GM12878 (cell line): ENCODE measurements at regions of chr3 and their contacts with region 1.

Region 1: DNA sequence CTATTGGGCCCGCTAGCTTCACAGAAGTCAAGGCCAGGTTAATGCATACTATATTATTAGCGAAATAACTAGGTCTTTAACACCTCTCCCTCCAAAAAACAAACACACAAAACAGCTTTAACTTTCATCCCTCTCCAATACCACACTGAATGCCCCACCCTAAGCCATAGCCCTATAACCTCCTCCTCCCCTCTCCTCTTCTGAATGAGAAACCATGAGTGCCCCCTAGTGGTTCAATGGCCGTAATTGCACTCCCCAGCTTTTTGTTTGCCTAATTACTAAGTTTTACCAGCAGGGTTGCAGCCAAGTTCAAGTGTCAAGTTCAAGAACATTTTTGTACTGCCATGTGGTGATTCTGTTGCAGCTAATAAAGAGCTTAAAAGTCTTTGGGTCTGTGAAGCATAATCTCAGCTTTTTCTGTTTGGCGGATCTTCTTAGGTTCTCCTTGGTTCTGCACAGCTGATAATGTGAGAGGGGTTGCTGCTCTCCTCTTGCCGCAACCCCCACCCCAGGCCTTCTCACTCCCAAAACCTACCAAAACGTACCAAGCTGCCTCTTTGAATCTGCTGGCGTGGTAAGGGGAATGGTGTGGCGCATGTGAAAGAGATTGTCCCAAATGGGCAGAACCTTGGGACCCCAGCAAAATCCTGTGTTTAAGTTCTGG is 57.9 kb downstream of the RPL22L1 start:
- DNase-seq: peak; percentile 30
- ATAC-seq: peak; percentile 91
- H3K4me3 ChIP-seq: no peak overlapping the region
- H3K27ac ChIP-seq: no peak overlapping the region
- H3K4me1 ChIP-seq: no peaks in the 10 kb centered on the region
- H3K27me3 ChIP-seq: no peaks in the 10 kb centered on the region; a peak in 2 of 4 replicates
- CTCF ChIP-seq: peak; percentile 85 to 95 (median 88)
- EP300 ChIP-seq: no peak
- POLR2A ChIP-seq: no peak
- RAD21 ChIP-seq: peak; percentile 93

Region 2: GRCh38 chr3:170553788-170554757 is 258.0 kb before region 1 on chr3:
- CTCF ChIA-PET with region 1: interaction called, 11 read pairs
- POLR2A ChIA-PET with region 1: no interaction called
- RAD21 ChIA-PET with region 1: interaction called, 3 read pairs
- SMC1A ChIA-PET with region 1: interaction called, 3 read pairs
- in situ Hi-C with region 1: no loop called
- intact Hi-C with region 1: no loop called
- DNase-seq: no peak
- ATAC-seq: no peak
- H3K4me3 ChIP-seq: no peak overlapping the region
- H3K27ac ChIP-seq: no peak overlapping the region
- H3K4me1 ChIP-seq: no peaks in the 10 kb centered on the region
- H3K27me3 ChIP-seq: peaks cover 3 to 10% of the 10 kb centered on the region in 2 experiments; a peak in 2 of 4 replicates
- CTCF ChIP-seq: no peak
- EP300 ChIP-seq: no peak
- POLR2A ChIP-seq: no peak
- RAD21 ChIP-seq: peak; percentile 12; the same call in 1 of the 2 replicates

Region 3: DNA sequence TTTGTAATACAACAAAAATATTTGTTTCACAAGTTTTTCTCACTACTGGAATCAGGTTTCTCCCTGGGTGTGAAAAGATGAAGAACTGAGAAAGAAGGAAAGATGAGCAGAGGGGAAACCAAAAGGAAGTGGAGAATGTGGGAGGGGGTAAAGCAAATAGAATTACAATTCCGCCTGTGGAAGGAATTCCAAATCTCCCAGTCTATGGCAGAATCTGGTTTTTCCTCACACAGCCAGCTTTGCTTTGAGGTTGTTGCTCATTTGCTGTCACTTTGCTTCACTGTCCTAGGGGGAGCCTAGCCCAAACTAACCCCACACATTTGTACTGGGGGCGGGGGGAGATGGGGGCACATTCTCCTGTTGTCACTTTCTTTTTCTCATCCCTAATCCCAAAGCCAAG is 14.0 kb after region 1 on chr3:
- CTCF ChIA-PET with region 1: interaction called, 12 read pairs
- POLR2A ChIA-PET with region 1: no interaction called
- RAD21 ChIA-PET with region 1: no interaction called
- SMC1A ChIA-PET with region 1: interaction called, 5 read pairs
- in situ Hi-C with region 1: no loop called
- intact Hi-C with region 1: no loop called
- DNase-seq: no peak
- ATAC-seq: no peak
- H3K4me3 ChIP-seq: no peak overlapping the region
- H3K27ac ChIP-seq: no peak overlapping the region
- H3K4me1 ChIP-seq: no peaks in the 10 kb centered on the region
- H3K27me3 ChIP-seq: peaks cover 0 to 6% of the 10 kb centered on the region in 2 experiments
- CTCF ChIP-seq: no peak
- EP300 ChIP-seq: no peak
- POLR2A ChIP-seq: no peak
- RAD21 ChIP-seq: no peak

Region 4: GRCh38 chr3:170848292-170848917 is 36.3 kb after region 1 on chr3:
- CTCF ChIA-PET with region 1: interaction called, 25 read pairs
- POLR2A ChIA-PET with region 1: no interaction called
- RAD21 ChIA-PET with region 1: interaction called, 3 read pairs
- SMC1A ChIA-PET with region 1: interaction called, 4 read pairs
- in situ Hi-C with region 1: no loop called
- intact Hi-C with region 1: no loop called
- DNase-seq: no peak
- ATAC-seq: no peak
- H3K4me3 ChIP-seq: no peak overlapping the region
- H3K27ac ChIP-seq: no peak overlapping the region
- H3K4me1 ChIP-seq: no peaks in the 10 kb centered on the region
- H3K27me3 ChIP-seq: peaks cover under 1 to 6% of the 10 kb centered on the region in 2 experiments; a peak in 3 of 4 replicates
- CTCF ChIP-seq: peak in 2 of 3 experiments; percentile 9 to 16; a peak in 3 of 6 replicates
- EP300 ChIP-seq: no peak
- POLR2A ChIP-seq: no peak
- RAD21 ChIP-seq: no peak